Activated T-helper 1 cell treated with anti-CD3 and anti-CD28 coated beads, Interleukin-12 subunit alpha, Interleukin-12 subunit beta, Interleukin-2, Interleukin-4 antibody, amounts not matched to agents 30 ng/mL and 10 ng/mL and 1 ng/mL, durations not matched to agents 14 hours and 24 hours and 36 hours (primary cell): ENCODE measurements at regions of chr6 and their contacts with region 1.

Region 1: DNA sequence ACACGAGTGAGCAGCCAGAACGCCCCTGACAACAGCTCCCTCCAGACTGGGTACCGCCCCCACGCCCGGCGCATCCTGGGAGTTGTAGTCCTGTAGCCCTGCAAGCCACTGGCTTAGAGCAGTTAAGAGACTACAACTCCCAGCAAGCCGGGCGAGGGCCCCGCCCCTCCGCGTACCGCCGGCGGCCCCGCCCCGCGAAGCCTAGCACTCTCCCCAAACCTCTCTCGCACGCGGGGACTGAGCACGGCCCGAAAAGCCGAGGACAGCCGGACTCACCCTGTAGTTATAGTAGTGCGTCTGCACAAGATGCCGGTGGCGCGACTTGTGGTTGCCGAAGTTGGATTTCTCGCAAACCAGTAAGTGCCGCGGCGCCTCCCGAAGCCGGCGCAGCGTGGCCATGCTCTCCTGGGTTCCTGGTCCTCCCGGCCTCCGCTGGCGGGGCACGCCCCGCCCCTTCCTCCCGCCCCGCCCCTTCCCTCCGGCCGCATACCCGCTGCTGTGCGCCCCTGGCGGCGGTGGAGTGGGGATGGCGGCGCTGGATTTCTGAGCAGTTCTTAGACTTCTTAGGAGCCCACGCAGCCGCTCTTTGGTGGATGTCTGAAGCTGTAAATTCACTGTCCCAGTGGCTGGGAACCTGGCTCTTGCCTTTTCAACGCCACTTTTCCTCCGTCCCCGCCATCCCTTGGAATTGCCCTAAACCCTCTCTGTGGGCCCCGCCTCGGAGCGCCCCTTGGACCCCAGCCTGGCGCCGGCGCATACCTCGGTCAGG is at the start of gene RPP40:
- DNase-seq: peak; percentile 97
- H3K4me3 Mint-ChIP-seq: peak within 1 kb of the TSS; percentile 90
- H3K27ac Mint-ChIP-seq: peak within 1 kb of the TSS; percentile 95
- H3K4me1 Mint-ChIP-seq: peaks cover 4% of the 10 kb centered on the region
- H3K27me3 Mint-ChIP-seq: no peaks in the 10 kb centered on the region
- total RNA-seq, gene RPP40: 15.1 and 16.4 TPM in 2 replicates

Region 2: GRCh38 chr6:4055420-4056041 is 948.3 kb before region 1 on chr6:
- intact Hi-C with region 1: loop called (anchors 1 kb)
- DNase-seq: no peak
- H3K4me3 Mint-ChIP-seq: no peak overlapping the region
- H3K27ac Mint-ChIP-seq: no peak overlapping the region
- H3K4me1 Mint-ChIP-seq: peaks cover 41% of the 10 kb centered on the region
- H3K27me3 Mint-ChIP-seq: no peaks in the 10 kb centered on the region

Region 3: GRCh38 chr6:4775584-4776494 is 227.9 kb before region 1 on chr6 and contains the start of gene CDYL:
- intact Hi-C with region 1: loop called (anchors 1 kb)
- DNase-seq: peak; percentile 87
- H3K4me3 Mint-ChIP-seq: peak within 1 kb of the TSS; percentile 89
- H3K27ac Mint-ChIP-seq: peak within 1 kb of the TSS; percentile 83
- H3K4me1 Mint-ChIP-seq: peaks cover 47% of the 10 kb centered on the region
- H3K27me3 Mint-ChIP-seq: peaks cover 34% of the 10 kb centered on the region
- total RNA-seq, gene CDYL: 26.8 and 29.5 TPM in 2 replicates

Region 4: DNA sequence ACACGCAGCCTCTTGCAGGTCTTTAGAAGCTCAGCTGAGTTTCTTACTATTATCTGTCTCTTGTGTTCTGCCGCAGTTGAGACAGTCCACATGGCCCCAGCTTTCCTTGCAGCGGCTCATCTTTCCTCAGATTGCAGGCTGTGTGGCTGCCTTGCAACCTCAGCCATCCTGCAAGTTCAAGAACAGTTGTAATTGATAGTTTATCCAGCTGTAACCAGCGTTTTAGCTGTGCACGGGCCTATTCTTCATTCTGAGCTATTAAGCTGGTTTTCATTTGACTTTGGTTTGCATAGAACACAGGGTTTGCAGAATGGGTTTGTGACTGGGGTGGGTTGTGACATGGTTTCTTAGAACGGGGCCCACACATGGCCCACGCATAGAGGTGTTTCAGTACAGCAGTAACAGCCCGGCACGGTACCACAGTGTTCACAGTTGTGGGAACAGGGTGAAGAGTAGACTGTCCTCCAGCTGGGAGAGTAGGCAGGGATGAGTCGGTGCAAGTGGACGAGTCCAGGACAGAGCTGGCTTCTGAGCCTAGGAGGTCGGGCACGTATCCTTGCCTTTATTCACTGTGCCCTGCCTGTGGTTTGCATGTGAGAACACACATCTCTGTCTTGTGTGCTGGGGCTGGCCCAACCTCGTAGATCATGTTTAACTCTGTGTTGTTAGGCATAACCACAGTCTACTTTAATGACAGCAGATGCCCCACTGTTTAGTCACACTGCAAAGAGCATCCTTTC is 89.2 kb before region 1 on chr6:
- intact Hi-C with region 1: no loop called
- DNase-seq: no peak
- H3K4me3 Mint-ChIP-seq: no peak overlapping the region
- H3K27ac Mint-ChIP-seq: no peak overlapping the region
- H3K4me1 Mint-ChIP-seq: peaks cover 21% of the 10 kb centered on the region
- H3K27me3 Mint-ChIP-seq: no peaks in the 10 kb centered on the region

Region 5: DNA sequence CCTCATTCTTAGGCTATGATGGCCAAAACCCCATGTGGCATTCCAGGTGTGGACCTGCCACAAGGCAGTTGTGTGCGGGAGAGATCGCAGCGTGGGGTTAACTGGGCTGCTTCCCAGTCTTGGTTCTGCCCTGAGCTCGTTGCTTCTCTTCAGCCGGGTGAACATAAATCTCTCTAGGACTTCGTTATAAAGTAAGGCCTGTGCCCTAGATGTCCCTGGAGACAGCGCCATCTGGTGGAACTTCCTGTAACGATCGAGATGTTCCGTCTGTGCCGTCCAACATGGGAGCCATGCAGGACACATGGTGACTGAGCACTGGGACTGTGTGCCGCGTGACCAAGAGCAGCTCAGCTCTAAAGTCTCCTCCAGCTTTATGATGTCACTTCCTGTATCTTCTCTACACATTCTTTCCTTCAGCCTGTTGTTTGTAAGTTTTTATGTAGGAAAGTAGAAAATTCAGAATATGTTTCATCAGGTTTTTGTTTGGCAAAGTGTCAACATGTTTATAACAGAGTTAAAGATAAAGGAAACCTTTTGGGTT is 26.9 kb after region 1 on chr6:
- intact Hi-C with region 1: loop called (anchors 1 kb)
- DNase-seq: peak; percentile 62
- H3K4me3 Mint-ChIP-seq: no peak overlapping the region
- H3K27ac Mint-ChIP-seq: no peak overlapping the region
- H3K4me1 Mint-ChIP-seq: peaks cover 6% of the 10 kb centered on the region
- H3K27me3 Mint-ChIP-seq: peaks cover 3% of the 10 kb centered on the region

Region 6: DNA sequence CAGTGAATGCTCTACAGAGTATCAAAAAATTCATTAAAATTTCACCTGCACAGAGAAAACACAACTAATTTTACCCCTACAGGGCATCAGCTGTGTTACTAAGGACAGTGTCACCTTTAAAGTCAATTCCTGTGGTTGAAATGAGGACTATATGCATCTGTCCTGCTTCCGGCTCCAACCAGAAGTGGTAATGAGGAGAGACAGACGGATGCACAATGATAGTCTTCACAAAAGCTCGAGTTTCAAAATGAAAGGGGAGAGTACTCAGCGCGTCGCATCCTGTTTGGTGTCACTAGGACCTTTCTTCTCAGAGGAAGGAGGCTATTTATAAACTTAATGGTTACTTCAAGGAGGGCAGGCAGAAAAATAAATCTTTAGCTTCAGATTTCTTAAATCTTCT is 170.5 kb after region 1 on chr6:
- intact Hi-C with region 1: loop called (anchors 5 kb)
- DNase-seq: peak; percentile 63
- H3K4me3 Mint-ChIP-seq: peak overlapping the region; percentile 45
- H3K27ac Mint-ChIP-seq: peak overlapping the region; percentile 83
- H3K4me1 Mint-ChIP-seq: peaks cover 48% of the 10 kb centered on the region
- H3K27me3 Mint-ChIP-seq: peaks cover 2% of the 10 kb centered on the region